ENCODE measurements at regions of chr6 and their contacts with region 1.

Region 1: GRCh38 chr6:123715006-123715875 is 78.5 kb upstream of the TRDN start:
- DNase-seq: no peak
- H3K4me3 ChIP-seq: no peak overlapping the region
- CTCF ChIP-seq: no peak
- POLR2A ChIP-seq: no peak

Region 2: DNA sequence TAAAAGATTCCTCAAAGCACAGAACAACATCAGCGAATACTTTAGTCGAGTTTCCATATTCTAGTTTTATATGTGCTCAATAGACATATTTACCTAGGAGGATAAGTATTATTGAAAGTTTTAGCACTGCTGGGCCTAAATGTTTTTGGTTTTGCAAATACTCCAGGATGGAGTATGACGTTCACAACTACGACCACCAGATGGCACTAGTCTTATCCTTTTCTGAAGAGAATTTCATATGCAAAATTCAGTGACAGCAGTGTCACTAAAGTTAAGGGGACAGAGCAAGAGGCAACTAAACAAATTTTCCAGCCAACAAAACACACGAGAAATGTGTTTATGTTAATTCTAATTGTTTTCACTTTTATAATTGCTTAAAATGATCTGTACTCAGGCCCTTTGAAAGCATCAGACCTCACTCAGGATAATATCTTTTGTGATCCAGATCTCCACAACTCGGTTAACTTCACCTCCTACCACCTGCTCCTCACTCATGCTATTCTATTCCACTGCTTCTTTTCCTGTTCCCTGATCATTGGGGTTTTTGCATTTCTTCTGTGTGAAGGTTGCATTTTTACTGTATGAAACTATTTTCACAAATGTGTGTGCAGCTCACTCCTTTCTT is 299.3 kb before region 1 on chr6:
- intact Hi-C with region 1: loop called (anchors 10 kb)
- DNase-seq: peak in 1 of 2 donors; percentile 56
- H3K4me3 ChIP-seq: no peak overlapping the region
- CTCF ChIP-seq: no peak
- POLR2A ChIP-seq: no peak